SK-N-SH (cell line): ENCODE measurements at regions of chr12 and their contacts with region 1.

Region 1: DNA sequence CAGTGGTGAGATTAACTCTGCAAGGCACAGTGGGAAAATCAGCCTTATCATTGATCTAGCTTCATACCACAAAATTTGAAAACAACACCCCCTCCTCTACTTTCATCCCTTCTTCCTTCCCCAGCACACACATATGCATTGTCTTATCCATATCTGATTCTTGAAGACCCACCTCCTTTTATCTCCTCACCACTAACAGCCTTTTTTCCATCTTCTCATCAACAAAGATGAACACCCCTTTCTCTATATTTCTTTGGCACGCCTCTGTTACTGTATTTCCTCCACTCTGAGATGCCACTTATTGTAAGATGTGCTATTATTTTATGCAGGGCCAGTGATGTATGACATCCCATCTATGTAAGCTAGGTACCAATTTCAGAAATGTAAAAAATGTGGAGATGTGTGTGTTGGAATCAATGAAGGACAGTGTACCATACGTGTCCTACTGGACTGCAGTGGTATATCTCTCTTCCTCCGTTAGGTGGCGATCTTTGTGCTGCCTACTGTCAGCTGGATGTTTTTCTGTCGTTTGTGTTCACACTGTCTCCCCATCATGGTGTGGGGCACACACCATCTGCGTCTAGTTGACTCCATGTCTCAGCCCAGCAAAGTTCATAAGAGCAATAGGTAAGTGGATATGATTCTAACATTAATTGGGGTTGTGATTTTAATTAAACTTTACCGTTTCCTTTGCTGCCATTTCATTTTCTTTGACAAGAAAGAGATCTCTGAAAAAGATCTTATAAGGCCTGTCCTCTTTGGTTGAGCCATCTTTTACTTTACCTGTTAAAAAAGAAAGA is 24.0 kb downstream of the CCDC38 start:
- DNase-seq: peak; percentile 70
- H3K4me3 ChIP-seq: no peak overlapping the region
- H3K27ac ChIP-seq: no peak overlapping the region
- H3K4me1 ChIP-seq: peaks cover 0 to 2% of the 10 kb centered on the region in 2 experiments; a peak in 1 of 4 replicates
- H3K27me3 ChIP-seq: peaks cover 6% of the 10 kb centered on the region; the same call in 1 of the 2 replicates
- CTCF ChIP-seq: peak; percentile 82
- EP300 ChIP-seq: no peak
- RAD21 ChIP-seq: peak; percentile 92

Region 2: DNA sequence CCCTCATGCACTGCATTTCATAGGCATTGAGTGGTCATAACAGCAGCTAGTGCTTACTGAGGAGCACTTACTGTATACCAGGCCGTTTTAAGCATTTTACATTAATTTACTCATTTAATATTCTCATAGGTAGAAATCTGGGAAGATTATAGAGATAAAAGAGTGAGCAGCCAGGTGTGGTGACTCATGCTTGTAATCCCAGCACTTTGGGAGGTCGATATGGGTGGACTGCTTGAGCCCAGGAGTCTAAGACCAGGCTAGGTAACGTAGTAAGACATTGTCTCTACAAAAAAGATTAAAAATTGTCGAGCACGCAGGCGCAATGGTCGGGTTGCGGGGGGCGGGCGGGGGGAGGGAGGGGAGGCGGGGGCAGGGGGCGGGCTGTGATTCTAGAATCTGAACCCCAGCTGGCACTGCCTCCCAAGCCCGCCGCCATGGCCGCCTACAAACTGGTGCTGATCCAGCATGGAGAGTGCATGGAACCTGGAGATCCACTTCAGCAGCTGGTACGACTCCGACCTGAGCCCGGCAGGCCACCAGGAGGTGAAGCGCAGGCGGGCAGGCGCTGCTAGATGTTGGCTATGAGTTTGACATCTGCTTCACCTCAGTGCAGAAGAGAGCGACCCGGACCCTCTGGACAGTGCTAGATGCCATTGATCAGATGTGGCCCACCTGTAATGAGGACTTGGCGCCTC is 246.4 kb before region 1 on chr12:
- CTCF ChIA-PET with region 1: no interaction called
- POLR2A ChIA-PET with region 1: no interaction called
- DNase-seq: no peak
- H3K4me3 ChIP-seq: no peak overlapping the region
- H3K27ac ChIP-seq: no peak overlapping the region
- H3K4me1 ChIP-seq: peaks cover 0 to 10% of the 10 kb centered on the region in 2 experiments; a peak in 3 of 4 replicates
- H3K27me3 ChIP-seq: no peaks in the 10 kb centered on the region
- CTCF ChIP-seq: no peak
- EP300 ChIP-seq: no peak
- RAD21 ChIP-seq: no peak

Region 3: DNA sequence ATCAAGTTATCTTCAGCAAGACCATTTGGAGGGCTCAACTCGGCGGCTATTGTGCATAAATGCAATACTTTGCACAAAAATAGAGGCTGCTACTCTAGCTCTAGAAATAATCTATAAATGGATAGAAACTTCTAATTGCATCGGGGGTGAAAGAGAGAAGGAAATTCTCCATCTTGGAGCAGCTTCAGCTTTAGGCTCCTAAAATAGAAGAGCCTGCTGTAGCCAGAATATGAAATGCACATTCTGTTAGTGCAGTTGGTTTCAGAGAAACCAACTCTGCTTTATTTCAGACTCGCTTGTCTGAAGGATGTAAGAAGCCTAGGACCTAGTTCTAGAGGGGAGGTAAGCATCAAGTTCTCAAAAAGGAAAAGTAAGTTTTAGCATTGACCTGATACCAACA is 21.5 kb before region 1 on chr12:
- CTCF ChIA-PET with region 1: interaction called, 20 read pairs
- POLR2A ChIA-PET with region 1: no interaction called
- DNase-seq: no peak
- H3K4me3 ChIP-seq: no peak overlapping the region
- H3K27ac ChIP-seq: no peak overlapping the region
- H3K4me1 ChIP-seq: no peaks in the 10 kb centered on the region
- H3K27me3 ChIP-seq: no peaks in the 10 kb centered on the region
- CTCF ChIP-seq: no peak
- EP300 ChIP-seq: no peak
- RAD21 ChIP-seq: no peak

Region 4: GRCh38 chr12:95951515-95951914 is 33.1 kb after region 1 on chr12:
- CTCF ChIA-PET with region 1: interaction called, 37 read pairs
- POLR2A ChIA-PET with region 1: no interaction called
- DNase-seq: no peak
- H3K4me3 ChIP-seq: no peak overlapping the region
- H3K27ac ChIP-seq: no peak overlapping the region
- H3K4me1 ChIP-seq: no peaks in the 10 kb centered on the region
- H3K27me3 ChIP-seq: no peaks in the 10 kb centered on the region
- CTCF ChIP-seq: no peak
- EP300 ChIP-seq: no peak
- RAD21 ChIP-seq: no peak

Region 5: GRCh38 chr12:95989504-95990123 is 71.2 kb after region 1 on chr12:
- CTCF ChIA-PET with region 1: interaction called, 154 read pairs
- POLR2A ChIA-PET with region 1: no interaction called
- DNase-seq: peak; percentile 64
- H3K4me3 ChIP-seq: no peak overlapping the region
- H3K27ac ChIP-seq: peak overlapping the region in 1 of 2 experiments; percentile 41; a peak in 2 of 4 replicates
- H3K4me1 ChIP-seq: peaks cover 0 to 17% of the 10 kb centered on the region in 2 experiments; a peak in 2 of 4 replicates
- H3K27me3 ChIP-seq: no peaks in the 10 kb centered on the region
- CTCF ChIP-seq: no peak
- EP300 ChIP-seq: no peak
- RAD21 ChIP-seq: no peak

Region 6: DNA sequence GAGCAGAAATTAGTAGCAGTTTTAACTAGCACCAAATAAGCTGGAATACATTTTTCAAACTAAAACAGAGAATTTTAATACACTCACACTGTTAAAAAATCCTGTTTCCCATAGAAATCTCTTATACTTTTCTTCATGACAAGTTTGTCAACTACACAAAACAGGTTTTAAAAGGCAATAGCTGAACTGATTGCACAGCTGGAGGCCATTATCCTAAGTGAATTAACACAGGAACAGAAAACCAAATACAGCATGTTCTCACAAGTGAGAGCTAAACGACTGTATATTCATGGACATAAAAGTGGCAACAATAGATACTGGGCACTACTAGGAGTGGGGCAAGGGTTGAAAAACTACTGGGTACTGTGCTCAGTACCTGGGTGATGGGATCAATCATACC is 89.3 kb after region 1 on chr12:
- CTCF ChIA-PET with region 1: interaction called, 20 read pairs
- POLR2A ChIA-PET with region 1: no interaction called
- DNase-seq: no peak
- H3K4me3 ChIP-seq: no peak overlapping the region
- H3K27ac ChIP-seq: peak overlapping the region in 1 of 2 experiments; percentile 25; a peak in 2 of 4 replicates
- H3K4me1 ChIP-seq: peaks cover 0 to 6% of the 10 kb centered on the region in 2 experiments; a peak in 2 of 4 replicates
- H3K27me3 ChIP-seq: no peaks in the 10 kb centered on the region
- CTCF ChIP-seq: no peak
- EP300 ChIP-seq: peak in 1 of 2 experiments; percentile 10; a peak in 1 of 4 replicates
- RAD21 ChIP-seq: no peak